ENCODE measurements at regions of chr11 and their contacts with region 1.

Region 1: DNA sequence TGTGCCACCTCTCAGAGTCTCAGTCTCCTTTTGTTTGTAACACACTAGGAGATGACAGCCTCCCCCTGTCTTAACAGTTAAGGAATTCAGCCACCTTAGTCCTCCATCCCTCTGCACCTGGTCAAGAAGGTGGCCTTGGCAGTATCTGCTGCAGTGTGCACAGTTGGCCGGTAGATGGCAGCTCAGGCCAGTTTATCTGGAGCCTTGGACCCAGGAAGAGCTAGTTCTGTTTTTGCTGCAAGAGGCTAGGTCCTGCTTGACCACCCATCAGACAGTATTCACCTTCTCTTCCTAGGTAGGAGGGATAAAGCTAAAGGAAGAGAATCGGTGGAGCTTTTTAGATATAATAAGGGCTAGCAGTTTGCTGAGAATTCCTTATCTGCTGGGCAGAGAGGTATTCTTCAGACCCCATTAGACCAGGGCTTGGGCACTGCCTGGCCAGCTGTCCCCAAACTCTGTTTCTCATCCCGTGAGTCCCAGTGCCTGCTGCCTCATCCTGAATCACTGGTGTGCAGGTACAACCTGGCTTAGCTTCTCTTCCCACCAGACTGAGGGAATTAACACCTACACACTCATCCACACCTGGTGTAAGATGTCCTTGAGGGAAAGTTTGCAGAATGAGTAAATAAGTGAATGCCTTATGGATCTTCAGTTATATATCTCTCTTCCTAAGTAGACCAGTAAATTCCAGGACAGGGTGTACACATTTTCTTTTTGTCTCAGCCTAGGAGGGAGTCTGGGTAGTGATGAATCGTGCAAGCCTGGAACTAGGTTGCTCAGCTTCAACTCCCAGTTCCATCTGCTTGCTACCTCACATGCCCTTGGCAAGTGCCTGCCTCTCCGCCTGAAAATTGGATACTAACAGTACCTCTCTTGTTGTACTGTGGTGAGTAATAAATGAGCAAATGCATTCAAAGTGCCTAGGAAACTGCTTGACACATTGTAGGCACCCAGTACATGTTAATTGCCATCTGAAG is 70.8 kb upstream of the NARS2 start:
- DNase-seq: peak; percentile 82 to 90
- H3K4me3 ChIP-seq: no peak overlapping the region
- H3K4me3 Mint-ChIP-seq: no peak overlapping the region
- H3K27ac Mint-ChIP-seq: no peak overlapping the region
- H3K4me1 ChIP-seq: no peaks in the 10 kb centered on the region
- H3K4me1 Mint-ChIP-seq: no peaks in the 10 kb centered on the region
- H3K27me3 ChIP-seq: no peaks in the 10 kb centered on the region
- H3K27me3 Mint-ChIP-seq: peaks cover 11% of the 10 kb centered on the region
- CTCF ChIP-seq: peak; percentile 98 to 99

Region 2: GRCh38 chr11:78504181-78504580 is 141.3 kb before region 1 on chr11:
- CTCF ChIA-PET with region 1: no interaction called
- POLR2A ChIA-PET with region 1: no interaction called
- intact Hi-C with region 1: no loop called
- DNase-seq: no peak
- H3K4me3 ChIP-seq: no peak overlapping the region
- H3K4me3 Mint-ChIP-seq: no peak overlapping the region
- H3K27ac Mint-ChIP-seq: no peak overlapping the region
- H3K4me1 ChIP-seq: no peaks in the 10 kb centered on the region
- H3K4me1 Mint-ChIP-seq: no peaks in the 10 kb centered on the region
- H3K27me3 ChIP-seq: no peaks in the 10 kb centered on the region
- H3K27me3 Mint-ChIP-seq: no peaks in the 10 kb centered on the region
- CTCF ChIP-seq: no peak

Region 3: DNA sequence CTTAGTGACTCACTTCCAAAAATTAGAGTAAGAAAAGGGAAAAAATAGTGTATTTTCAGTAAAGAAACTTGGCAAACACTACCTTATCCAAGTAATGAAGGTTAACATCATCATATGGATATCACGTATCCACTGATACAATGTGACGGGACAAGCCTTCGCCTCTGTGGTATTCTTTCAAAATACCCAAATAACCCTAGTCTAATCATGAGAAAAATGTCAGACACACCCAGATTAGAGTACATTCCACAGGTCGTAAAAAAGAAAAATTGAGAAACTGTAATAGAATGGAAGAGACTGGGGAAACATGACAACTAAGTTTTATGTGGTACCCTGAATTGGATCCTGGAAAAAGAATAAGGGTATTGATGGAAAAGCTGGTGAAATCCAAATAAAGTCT is 119.8 kb before region 1 on chr11:
- CTCF ChIA-PET with region 1: no interaction called
- POLR2A ChIA-PET with region 1: no interaction called
- intact Hi-C with region 1: no loop called
- DNase-seq: peak in 1 of 2 experiments; percentile 17
- H3K4me3 ChIP-seq: no peak overlapping the region
- H3K4me3 Mint-ChIP-seq: no peak overlapping the region
- H3K27ac Mint-ChIP-seq: peak overlapping the region; percentile 12
- H3K4me1 ChIP-seq: peaks cover 20% of the 10 kb centered on the region
- H3K4me1 Mint-ChIP-seq: peaks cover 16% of the 10 kb centered on the region
- H3K27me3 ChIP-seq: no peaks in the 10 kb centered on the region
- H3K27me3 Mint-ChIP-seq: no peaks in the 10 kb centered on the region
- CTCF ChIP-seq: no peak

Region 4: DNA sequence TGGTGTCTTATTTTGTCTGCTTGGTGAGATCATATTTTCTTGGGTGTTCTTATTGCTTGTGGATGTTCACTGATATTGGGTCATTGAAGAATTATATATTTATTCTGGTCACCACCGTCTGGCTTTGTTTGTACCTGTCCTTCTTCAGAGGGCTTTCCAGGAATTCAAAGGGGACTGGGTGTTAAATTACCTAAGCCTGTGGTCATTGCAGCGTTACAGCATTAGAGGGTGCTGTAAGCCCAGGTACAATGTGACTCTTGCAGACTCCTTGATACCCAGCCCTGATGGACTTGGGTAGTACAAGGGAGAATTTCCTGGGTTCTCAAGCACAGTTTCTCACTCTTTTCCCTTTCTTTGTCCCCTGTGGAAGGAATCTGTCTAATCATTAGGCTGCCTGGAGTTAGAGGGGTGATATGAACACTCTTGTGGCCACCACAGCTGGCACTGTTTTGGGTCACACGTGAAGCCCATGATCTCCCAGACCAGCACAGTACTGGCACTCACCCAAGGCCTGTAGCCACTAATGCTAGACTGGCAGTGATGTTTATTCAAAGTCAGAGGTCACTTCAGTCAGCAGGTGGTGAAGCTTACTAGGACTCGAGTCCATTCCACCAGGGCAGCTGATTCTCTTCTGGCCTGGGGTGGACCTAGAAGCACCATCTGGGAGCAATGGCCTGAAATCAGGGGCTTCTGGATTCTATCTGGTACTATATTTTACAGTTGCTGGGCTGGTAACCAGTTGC is 14.8 kb before region 1 on chr11:
- CTCF ChIA-PET with region 1: no interaction called
- POLR2A ChIA-PET with region 1: no interaction called
- intact Hi-C with region 1: no loop called
- DNase-seq: no peak
- H3K4me3 ChIP-seq: no peak overlapping the region
- H3K4me3 Mint-ChIP-seq: no peak overlapping the region
- H3K27ac Mint-ChIP-seq: no peak overlapping the region
- H3K4me1 ChIP-seq: no peaks in the 10 kb centered on the region
- H3K4me1 Mint-ChIP-seq: no peaks in the 10 kb centered on the region
- H3K27me3 ChIP-seq: no peaks in the 10 kb centered on the region
- H3K27me3 Mint-ChIP-seq: peaks cover 21% of the 10 kb centered on the region
- CTCF ChIP-seq: peak in 1 of 2 experiments; percentile 4

Region 5: DNA sequence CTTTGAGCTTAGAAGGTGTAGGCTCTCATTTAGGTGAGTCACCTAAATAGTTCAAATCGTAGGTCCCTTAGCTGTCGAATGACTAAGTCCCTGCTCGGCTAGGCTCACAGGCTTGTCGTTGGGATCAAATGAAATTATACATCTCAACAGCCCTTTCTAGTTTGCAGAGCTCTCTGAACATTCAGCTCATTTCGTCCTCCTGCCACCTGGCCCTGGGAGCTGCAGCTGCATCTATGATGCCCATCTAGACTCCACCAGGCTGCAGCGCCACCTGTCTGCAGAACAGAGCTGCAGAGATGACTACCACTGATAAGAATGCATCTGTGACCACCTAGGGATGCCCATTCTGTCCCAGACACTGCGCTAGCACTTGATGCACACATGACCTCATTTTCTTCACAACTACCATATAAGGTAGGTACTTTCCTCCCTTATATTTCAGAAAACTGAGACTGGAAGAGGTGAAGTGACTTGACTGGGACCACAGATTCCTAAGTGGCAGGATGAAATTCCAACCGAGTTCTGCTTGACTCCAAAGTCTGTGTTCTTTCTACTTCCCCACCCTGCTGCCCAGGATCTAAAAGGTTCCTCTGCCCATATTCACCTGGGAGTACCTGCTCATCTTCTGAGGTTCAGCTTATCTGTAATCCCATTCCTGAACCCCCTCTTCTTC is 70.3 kb after region 1 on chr11:
- CTCF ChIA-PET with region 1: interaction called, 392 read pairs
- POLR2A ChIA-PET with region 1: interaction called, 3 read pairs
- intact Hi-C with region 1: loop called (anchors 1 kb)
- DNase-seq: peak; percentile 85 to 88
- H3K4me3 ChIP-seq: no peak overlapping the region
- H3K4me3 Mint-ChIP-seq: no peak overlapping the region
- H3K27ac Mint-ChIP-seq: no peak overlapping the region
- H3K4me1 ChIP-seq: no peaks in the 10 kb centered on the region
- H3K4me1 Mint-ChIP-seq: no peaks in the 10 kb centered on the region
- H3K27me3 ChIP-seq: no peaks in the 10 kb centered on the region; the same call in 1 of the 2 replicates
- H3K27me3 Mint-ChIP-seq: peaks cover 16% of the 10 kb centered on the region
- CTCF ChIP-seq: peak; percentile 98 to 99

Region 6: GRCh38 chr11:78860720-78861422 is 215.4 kb after region 1 on chr11:
- CTCF ChIA-PET with region 1: interaction called, 3 read pairs
- POLR2A ChIA-PET with region 1: no interaction called
- intact Hi-C with region 1: loop called (anchors 5 kb)
- DNase-seq: peak in 1 of 2 experiments; percentile 53
- H3K4me3 ChIP-seq: no peak overlapping the region
- H3K4me3 Mint-ChIP-seq: no peak overlapping the region
- H3K27ac Mint-ChIP-seq: no peak overlapping the region
- H3K4me1 ChIP-seq: no peaks in the 10 kb centered on the region
- H3K4me1 Mint-ChIP-seq: no peaks in the 10 kb centered on the region
- H3K27me3 ChIP-seq: no peaks in the 10 kb centered on the region
- H3K27me3 Mint-ChIP-seq: peaks cover 7% of the 10 kb centered on the region
- CTCF ChIP-seq: no peak

Region 7: DNA sequence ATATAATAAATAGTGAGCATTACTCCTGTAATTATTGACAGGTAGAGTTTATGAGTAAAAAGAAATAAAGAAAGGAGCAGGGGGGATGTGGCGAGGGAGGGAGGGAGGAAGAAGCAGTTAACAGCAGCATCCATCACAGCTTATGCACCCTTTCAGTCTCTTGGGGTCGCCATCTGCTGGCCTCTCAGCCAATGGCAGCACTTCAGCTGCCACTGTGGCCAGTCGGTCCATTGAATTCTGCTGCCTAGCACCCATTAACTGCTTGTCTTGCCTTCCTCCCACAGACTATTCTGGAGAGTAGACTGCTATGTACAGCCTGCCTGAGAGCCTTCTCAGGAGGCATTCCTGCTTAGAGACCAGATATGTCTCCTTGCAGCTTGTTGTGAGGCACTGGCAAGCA is 407.0 kb after region 1 on chr11:
- CTCF ChIA-PET with region 1: interaction called, 45 read pairs
- POLR2A ChIA-PET with region 1: no interaction called
- intact Hi-C with region 1: loop called (anchors 1 kb)
- DNase-seq: peak in 1 of 2 experiments; percentile 42
- H3K4me3 ChIP-seq: no peak overlapping the region
- H3K4me3 Mint-ChIP-seq: no peak overlapping the region
- H3K27ac Mint-ChIP-seq: no peak overlapping the region
- H3K4me1 ChIP-seq: no peaks in the 10 kb centered on the region
- H3K4me1 Mint-ChIP-seq: no peaks in the 10 kb centered on the region
- H3K27me3 ChIP-seq: no peaks in the 10 kb centered on the region
- H3K27me3 Mint-ChIP-seq: peaks cover 6% of the 10 kb centered on the region
- CTCF ChIP-seq: peak; percentile 65 to 67

Region 8: GRCh38 chr11:79100093-79100910 is 454.8 kb after region 1 on chr11:
- CTCF ChIA-PET with region 1: interaction called, 67 read pairs
- POLR2A ChIA-PET with region 1: no interaction called
- intact Hi-C with region 1: loop called (anchors 1 kb)
- DNase-seq: peak; percentile 68 to 73
- H3K4me3 ChIP-seq: no peak overlapping the region
- H3K4me3 Mint-ChIP-seq: no peak overlapping the region
- H3K27ac Mint-ChIP-seq: no peak overlapping the region
- H3K4me1 ChIP-seq: peaks cover 9% of the 10 kb centered on the region; the same call in 1 of the 2 replicates
- H3K4me1 Mint-ChIP-seq: peaks cover 6% of the 10 kb centered on the region
- H3K27me3 ChIP-seq: no peaks in the 10 kb centered on the region
- H3K27me3 Mint-ChIP-seq: peaks cover 6% of the 10 kb centered on the region
- CTCF ChIP-seq: peak; percentile 86 to 90

Region 9: DNA sequence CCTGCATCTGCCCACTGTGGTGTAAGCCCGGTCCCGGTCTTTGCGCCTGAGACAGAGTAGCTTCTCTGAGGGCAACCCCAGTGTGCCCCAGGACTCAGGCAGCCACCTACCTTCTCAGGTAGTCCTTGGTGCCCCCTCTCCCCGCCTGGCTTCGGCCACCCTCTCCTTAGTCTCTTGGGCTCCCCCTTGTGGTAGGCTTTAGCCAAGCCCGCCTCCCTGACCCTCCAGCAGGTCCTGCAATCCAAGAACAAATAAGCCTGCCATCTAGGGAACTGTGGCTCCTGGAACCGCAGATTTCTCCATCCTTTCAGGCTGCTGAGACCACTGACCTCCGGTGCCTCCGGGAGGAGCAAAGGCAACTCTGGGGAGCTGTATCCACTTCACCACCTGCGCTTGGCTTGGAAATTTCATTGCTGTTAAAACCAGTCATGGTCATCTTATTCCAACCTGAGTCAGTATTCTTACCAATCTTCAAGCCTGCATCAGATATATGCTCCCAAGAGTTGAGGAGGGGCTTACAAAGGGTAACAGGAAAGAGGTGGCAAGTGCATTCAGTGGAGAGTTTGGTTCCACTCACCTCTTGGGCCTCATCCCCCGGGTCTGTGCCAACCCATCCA is 848.1 kb after region 1 on chr11:
- CTCF ChIA-PET with region 1: interaction called, 4 read pairs
- POLR2A ChIA-PET with region 1: no interaction called
- intact Hi-C with region 1: loop called (anchors 2 kb)
- DNase-seq: peak; percentile 89 to 93
- H3K4me3 ChIP-seq: no peak overlapping the region
- H3K4me3 Mint-ChIP-seq: no peak overlapping the region
- H3K27ac Mint-ChIP-seq: no peak overlapping the region
- H3K4me1 ChIP-seq: no peaks in the 10 kb centered on the region
- H3K4me1 Mint-ChIP-seq: peaks cover 6% of the 10 kb centered on the region
- H3K27me3 ChIP-seq: no peaks in the 10 kb centered on the region
- H3K27me3 Mint-ChIP-seq: peaks cover 5% of the 10 kb centered on the region
- CTCF ChIP-seq: peak; percentile 96 to 98

Measured in Caco-2 (cell line).